ENCODE measurements at regions of chr3 and their contacts with region 1.

Region 1: DNA sequence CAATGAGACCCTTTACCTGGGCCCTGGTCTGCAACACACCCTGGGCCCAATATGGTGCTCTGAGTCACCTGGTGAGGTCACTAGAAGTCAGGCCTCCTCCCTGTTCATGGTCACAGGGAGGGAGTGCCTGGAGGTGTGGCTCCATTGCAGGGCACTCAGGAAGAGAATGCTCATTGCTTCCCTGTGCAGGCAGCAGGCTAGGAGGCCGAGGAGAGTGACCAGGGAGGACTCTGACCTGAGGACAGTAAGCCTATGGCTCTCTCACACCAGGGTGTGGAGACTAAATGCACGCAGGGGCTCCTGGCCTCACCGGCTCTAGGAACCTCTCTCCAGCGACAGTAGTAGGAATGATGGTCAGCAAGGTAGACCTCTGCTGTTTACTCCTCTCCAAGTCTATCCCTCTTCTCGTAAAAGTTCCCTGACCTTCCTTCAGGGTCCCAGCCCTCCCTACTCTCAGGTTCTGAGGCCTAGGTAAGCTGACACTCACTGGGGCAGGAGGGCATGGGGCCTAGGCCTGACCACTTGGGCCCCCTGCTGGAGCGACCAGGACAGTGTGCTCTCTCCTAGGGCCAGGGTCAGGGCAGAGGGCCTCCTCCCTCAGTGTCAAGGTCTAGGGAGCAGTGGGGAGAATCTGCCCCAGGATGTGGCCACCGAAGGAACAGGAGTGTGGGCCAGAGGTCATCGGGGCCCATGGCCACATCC is 9.6 kb upstream of the SLCO2A1 start:
- DNase-seq: no peak
- ATAC-seq: peak; percentile 50

Region 2: GRCh38 chr3:133938770-133939462 is 100.4 kb before region 1 on chr3:
- intact Hi-C with region 1: loop called (anchors 1 kb)
- DNase-seq: no peak
- ATAC-seq: no peak

Region 3: GRCh38 chr3:134279471-134279870 is 240.2 kb after region 1 on chr3:
- intact Hi-C with region 1: no loop called
- DNase-seq: no peak
- ATAC-seq: no peak